CD4-positive, alpha-beta T cell (primary cell): ENCODE measurements at regions of chr7 and their contacts with region 1.

Region 1: GRCh38 chr7:43647673-43648472 is 65.0 kb downstream of the STK17A start:
- DNase-seq: peak in 9 of 14 experiments; percentile 32 to 69 (median 50)
- ATAC-seq: peak; percentile 16
- H3K4me3 ChIP-seq: peak overlapping the region; percentile 56
- H3K4me3 Mint-ChIP-seq: peak overlapping the region; percentile 76
- H3K27ac ChIP-seq: peak overlapping the region; percentile 75 to 96
- H3K27ac Mint-ChIP-seq: peak overlapping the region; percentile 87
- H3K4me1 ChIP-seq: peaks cover 97% of the 10 kb centered on the region
- H3K4me1 Mint-ChIP-seq: peaks cover 95% of the 10 kb centered on the region
- H3K27me3 ChIP-seq: no peaks in the 10 kb centered on the region
- H3K27me3 Mint-ChIP-seq: no peaks in the 10 kb centered on the region
- CTCF ChIP-seq: no peak

Region 2: DNA sequence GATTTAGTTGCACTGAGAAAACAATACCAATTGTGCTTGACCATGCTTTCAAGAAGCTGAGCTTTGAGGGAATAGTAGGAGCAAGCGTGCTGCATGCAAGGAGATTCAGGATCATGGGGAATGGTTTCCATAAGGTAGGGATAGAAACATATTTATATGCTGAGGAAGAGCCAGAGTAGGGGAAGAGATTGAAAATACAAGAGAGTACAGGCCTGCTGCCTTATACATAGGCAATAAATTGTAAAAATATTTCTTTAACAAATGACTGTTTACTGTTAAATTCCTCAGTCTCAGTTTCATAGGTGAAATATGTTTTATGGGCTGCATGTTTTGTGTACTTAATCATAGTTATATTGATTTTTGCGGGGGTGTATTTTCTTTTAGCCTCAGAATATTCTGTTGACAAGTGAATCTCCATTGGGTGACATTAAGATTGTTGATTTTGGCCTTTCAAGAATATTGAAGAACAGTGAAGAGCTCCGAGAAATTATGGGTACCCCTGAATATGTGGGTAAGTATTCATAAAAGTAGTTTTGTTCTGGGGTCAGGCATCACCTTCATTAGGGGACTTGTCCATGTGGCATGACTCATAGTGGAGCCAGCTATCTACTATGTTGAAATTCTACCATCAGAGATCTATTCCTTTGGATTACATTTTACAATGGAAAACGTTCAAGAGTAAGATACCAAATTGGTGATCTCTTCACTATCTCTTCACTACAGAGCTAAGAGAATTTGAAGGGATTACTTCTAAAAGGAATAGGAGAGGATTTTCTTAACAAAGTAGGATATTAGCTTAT is 28.5 kb before region 1 on chr7:
- CTCF ChIA-PET with region 1: interaction called, 3 read pairs
- POLR2A ChIA-PET with region 1: interaction called, 45 read pairs
- intact Hi-C with region 1: loop called in 1 of 2 experiments (anchors 5 kb)
- DNase-seq: no peak
- ATAC-seq: no peak
- H3K4me3 ChIP-seq: no peak overlapping the region
- H3K4me3 Mint-ChIP-seq: no peak overlapping the region
- H3K27ac ChIP-seq: peak overlapping the region; percentile 27 to 49
- H3K27ac Mint-ChIP-seq: no peak overlapping the region
- H3K4me1 ChIP-seq: peaks cover 66% of the 10 kb centered on the region
- H3K4me1 Mint-ChIP-seq: peaks cover 46% of the 10 kb centered on the region
- H3K27me3 ChIP-seq: no peaks in the 10 kb centered on the region
- H3K27me3 Mint-ChIP-seq: no peaks in the 10 kb centered on the region
- CTCF ChIP-seq: no peak

Region 3: GRCh38 chr7:43631559-43631958 is 16.3 kb before region 1 on chr7:
- CTCF ChIA-PET with region 1: interaction called, 6 read pairs
- POLR2A ChIA-PET with region 1: interaction called, 81 read pairs
- intact Hi-C with region 1: loop called (anchors 2 kb)
- DNase-seq: no peak
- ATAC-seq: peak; percentile 40
- H3K4me3 ChIP-seq: no peak overlapping the region
- H3K4me3 Mint-ChIP-seq: peak overlapping the region; percentile 70
- H3K27ac ChIP-seq: no peak overlapping the region
- H3K27ac Mint-ChIP-seq: no peak overlapping the region
- H3K4me1 ChIP-seq: peaks cover 38% of the 10 kb centered on the region
- H3K4me1 Mint-ChIP-seq: peaks cover 95% of the 10 kb centered on the region
- H3K27me3 ChIP-seq: no peaks in the 10 kb centered on the region
- H3K27me3 Mint-ChIP-seq: no peaks in the 10 kb centered on the region
- CTCF ChIP-seq: no peak

Region 4: GRCh38 chr7:43674584-43675436 is 26.9 kb after region 1 on chr7:
- CTCF ChIA-PET with region 1: interaction called, 4 read pairs
- POLR2A ChIA-PET with region 1: interaction called, 23 read pairs
- intact Hi-C with region 1: no loop called
- DNase-seq: no peak
- ATAC-seq: no peak
- H3K4me3 ChIP-seq: no peak overlapping the region
- H3K4me3 Mint-ChIP-seq: no peak overlapping the region
- H3K27ac ChIP-seq: no peak overlapping the region
- H3K27ac Mint-ChIP-seq: peak overlapping the region; percentile 56
- H3K4me1 ChIP-seq: peaks cover 18% of the 10 kb centered on the region
- H3K4me1 Mint-ChIP-seq: peaks cover 87% of the 10 kb centered on the region
- H3K27me3 ChIP-seq: no peaks in the 10 kb centered on the region
- H3K27me3 Mint-ChIP-seq: no peaks in the 10 kb centered on the region
- CTCF ChIP-seq: no peak

Region 5: DNA sequence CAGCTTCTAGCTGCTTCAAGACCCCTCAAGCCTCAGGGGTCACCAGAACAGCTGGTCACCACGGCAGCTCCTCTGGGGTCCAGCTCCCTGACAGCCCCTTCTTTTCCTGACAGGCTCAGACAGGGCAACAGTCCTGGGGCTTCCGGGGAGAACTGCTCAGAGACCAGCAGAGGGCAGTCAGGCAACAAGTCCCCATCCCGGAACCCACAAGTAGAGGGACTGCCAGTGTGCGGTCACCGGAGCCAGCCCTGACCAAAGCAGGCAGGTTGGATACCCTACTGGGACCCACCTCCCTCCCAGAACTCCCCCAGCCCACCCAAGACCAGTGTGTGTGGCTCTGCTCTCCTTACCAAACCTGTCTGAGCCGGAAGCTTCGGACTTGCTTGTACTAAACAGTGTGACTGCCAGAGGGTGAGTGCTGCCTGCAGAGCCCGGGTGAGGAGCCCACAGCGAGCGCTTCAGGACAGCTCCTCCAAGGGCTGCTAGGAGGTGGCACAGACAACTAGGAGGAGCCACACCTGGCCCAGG is 593.2 kb after region 1 on chr7:
- CTCF ChIA-PET with region 1: no interaction called
- POLR2A ChIA-PET with region 1: no interaction called
- intact Hi-C with region 1: no loop called
- DNase-seq: peak; percentile 33 to 80 (median 51)
- ATAC-seq: peak; percentile 86
- H3K4me3 ChIP-seq: peak overlapping the region; percentile 29
- H3K4me3 Mint-ChIP-seq: peak overlapping the region; percentile 30
- H3K27ac ChIP-seq: no peak overlapping the region
- H3K27ac Mint-ChIP-seq: no peak overlapping the region
- H3K4me1 ChIP-seq: peaks cover 10% of the 10 kb centered on the region
- H3K4me1 Mint-ChIP-seq: no peaks in the 10 kb centered on the region
- H3K27me3 ChIP-seq: no peaks in the 10 kb centered on the region
- H3K27me3 Mint-ChIP-seq: no peaks in the 10 kb centered on the region
- CTCF ChIP-seq: peak; percentile 67